ENCODE measurements at regions of chr16 and their contacts with region 1.

Region 1: GRCh38 chr16:9527976-9528375 is 436.5 kb downstream of the HAPSTR1 start:
- DNase-seq: no peak
- ATAC-seq: no peak

Region 2: DNA sequence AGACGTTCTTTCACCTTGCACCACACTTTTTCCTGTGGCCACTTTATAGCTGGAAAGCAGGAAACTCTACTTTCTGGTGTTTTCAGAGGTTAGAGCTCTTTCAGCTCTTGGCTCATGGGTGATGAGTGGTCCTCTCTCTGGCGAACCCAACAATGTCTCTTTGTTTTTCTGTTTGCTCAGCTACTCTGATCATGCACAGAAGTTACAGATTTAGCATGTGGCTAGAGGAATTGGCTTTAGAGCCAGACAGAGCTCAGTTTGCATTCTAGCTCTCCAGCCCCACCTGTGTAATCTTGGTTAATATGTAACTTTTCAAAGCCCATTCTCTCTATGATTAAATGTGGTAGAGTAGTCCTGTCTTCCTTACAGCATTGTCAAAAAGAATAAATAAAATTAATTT is 211.4 kb before region 1 on chr16:
- intact Hi-C with region 1: loop called in 1 of 2 experiments (anchors 5 kb)
- DNase-seq: no peak
- ATAC-seq: no peak

Region 3: DNA sequence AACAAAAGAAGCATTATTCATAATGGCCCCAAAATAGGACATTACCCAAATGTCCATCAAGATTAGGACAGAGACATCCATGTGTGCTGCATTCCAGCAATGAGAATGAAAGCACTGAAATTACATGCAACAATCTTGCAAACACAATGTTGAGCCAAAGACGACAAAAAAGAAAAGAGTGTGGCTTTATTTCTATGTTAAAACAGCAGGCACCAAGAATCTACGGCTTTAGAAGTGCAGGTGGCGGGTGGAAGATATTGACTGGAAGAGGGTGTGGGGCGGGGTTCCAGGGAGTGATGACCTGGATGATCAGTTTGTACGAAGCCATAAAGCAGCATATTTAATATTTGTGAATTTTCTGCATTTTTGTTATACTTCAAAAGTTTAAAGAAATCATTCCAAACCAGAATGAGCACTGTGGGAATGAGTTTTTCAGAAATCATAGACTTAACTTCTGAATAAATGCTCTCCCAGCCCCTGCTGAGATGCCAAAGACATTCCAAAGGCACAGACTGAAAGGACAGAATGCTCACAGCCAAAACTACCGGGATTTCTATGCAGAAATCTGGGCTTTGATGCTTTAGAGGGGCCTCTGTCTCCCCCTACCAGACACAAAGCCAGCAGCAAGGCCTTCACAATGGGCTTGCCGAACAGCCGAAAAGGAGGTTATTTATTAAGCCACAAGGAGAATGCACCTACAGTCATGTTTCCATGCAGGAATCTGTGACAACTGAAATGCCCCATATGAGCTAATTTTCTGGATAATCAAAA is 292.7 kb after region 1 on chr16:
- intact Hi-C with region 1: no loop called
- DNase-seq: no peak
- ATAC-seq: no peak

Measured in left cardiac atrium (tissue), 4 donors.